Ascending aorta (tissue), 2 donors: ENCODE measurements at regions of chr11 and their contacts with region 1.

Region 1: DNA sequence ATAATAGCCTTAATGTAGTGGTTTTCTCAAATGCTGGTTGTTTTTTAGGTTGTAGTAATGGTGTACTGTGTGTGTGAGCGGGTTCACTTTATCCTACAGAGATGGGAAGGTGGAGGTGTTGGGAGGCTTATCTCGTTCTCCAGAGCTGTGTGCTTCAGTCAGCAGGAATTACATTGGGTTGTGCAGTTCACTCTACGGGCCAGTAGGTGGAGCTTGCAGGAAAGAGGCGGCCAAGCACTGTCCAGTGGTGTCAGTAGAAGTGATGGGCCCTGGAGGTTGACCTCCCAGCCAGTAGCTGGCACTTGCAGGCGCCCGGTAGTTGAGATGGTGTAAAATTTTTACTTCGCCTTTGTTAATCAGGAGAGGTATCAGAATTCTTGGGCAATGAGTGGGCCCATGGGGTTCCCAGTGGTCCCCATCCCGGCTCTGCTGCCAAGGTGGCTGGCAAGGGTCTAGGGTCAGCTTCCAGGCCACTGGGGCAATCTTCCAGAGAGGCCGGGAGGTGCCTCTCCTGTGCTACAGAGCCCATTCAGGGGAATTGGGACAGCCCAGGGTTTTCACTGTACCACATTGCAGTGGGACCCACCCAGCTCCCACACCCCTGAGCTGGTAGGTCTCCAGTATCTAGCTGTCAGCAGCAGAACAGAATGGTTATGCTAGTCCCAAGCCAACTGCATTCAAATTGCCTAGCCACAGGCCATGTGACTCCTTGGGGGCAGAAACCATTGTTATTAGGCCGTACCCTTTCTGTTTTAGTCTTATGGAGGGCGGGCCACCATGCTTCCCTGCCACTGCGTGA is 43.9 kb downstream of the BIRC2 start:
- DNase-seq: peak in 1 of 2 donors; percentile 77
- H3K4me3 ChIP-seq: no peak overlapping the region
- H3K27ac ChIP-seq: no peak overlapping the region
- H3K4me1 ChIP-seq: no peaks in the 10 kb centered on the region
- H3K27me3 ChIP-seq: no peaks in the 10 kb centered on the region
- CTCF ChIP-seq: peak; percentile 69 to 76 (median 72)

Region 2: GRCh38 chr11:102410382-102410784 is 19.5 kb after region 1 on chr11:
- intact Hi-C with region 1: no loop called
- DNase-seq: no peak
- H3K4me3 ChIP-seq: no peak overlapping the region
- H3K27ac ChIP-seq: no peak overlapping the region
- H3K4me1 ChIP-seq: no peaks in the 10 kb centered on the region
- H3K27me3 ChIP-seq: no peaks in the 10 kb centered on the region
- CTCF ChIP-seq: no peak

Region 3: GRCh38 chr11:102451681-102452460 is 61.0 kb after region 1 on chr11:
- intact Hi-C with region 1: loop called (anchors 5 kb)
- DNase-seq: peak in 1 of 2 donors; percentile 73
- H3K4me3 ChIP-seq: peak overlapping the region; percentile 93 to 94
- H3K27ac ChIP-seq: peak overlapping the region; percentile 80 to 81
- H3K4me1 ChIP-seq: peaks cover 0 to 5% of the 10 kb centered on the region in 2 donors
- H3K27me3 ChIP-seq: no peaks in the 10 kb centered on the region
- CTCF ChIP-seq: peak in 1 of 3 experiments; percentile 28

Region 4: DNA sequence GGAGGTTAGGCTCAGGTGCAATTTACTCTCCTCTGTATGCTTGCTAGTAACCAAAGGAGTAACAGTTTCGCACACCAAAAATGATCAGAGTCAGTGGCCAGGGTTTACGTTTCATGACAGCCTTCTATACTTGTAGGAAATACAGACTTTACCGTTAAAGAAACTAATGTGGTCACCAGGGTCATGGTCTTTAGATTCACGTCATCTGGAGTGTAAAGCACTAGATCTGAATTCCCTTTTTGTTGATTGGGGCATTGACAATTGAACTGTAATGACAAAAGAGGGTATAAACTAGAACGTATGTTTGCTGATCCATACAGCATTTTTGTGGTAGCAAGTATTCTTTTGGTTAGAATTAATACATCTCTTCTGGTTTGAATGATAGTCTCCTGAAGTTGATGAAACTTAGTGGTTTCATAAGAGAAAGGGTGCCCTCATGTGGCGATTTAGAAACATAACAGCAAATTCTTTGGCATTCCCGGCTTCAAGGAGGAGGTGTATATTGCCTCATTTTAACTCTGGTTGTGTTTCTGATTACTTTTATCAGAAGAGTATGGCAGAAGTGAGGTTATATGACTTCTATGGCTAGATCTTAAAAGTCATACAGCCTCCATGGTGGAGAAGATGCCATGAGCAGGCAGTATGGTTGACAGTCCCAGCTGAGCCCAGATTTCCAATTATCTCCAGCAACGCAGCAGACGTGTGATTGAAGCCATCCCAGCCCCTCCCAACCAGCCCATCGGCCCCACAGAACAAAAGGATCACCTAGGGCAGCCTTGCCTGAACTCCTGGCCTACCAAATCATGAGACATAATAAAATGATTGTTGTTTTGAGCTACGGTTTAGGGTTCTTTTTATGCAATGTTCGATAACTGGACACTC is 104.5 kb after region 1 on chr11:
- intact Hi-C with region 1: loop called (anchors 1 kb)
- DNase-seq: no peak
- H3K4me3 ChIP-seq: no peak overlapping the region
- H3K27ac ChIP-seq: no peak overlapping the region
- H3K4me1 ChIP-seq: no peaks in the 10 kb centered on the region
- H3K27me3 ChIP-seq: no peaks in the 10 kb centered on the region
- CTCF ChIP-seq: peak; percentile 38 to 66 (median 54)

Region 5: DNA sequence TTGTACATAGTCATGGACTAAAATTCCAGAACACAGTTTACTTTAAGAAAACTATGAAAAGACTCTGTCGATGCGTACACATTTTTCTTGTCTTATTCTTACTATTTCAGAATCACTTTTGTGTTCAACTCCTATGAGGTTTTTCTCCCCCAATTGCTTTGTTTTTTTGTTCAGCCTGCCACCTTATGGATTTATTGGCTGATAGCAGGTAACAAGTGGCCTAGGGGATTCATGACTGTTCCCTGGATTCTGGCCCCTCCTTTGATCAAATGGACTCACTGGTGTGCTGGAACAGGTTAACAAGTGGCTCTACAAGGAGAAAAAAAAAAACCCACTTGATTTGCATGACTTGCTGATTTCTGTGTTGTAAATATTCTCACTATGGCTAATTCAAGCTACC is 223.6 kb after region 1 on chr11:
- intact Hi-C with region 1: loop called (anchors 5 kb)
- DNase-seq: no peak
- H3K4me3 ChIP-seq: no peak overlapping the region
- H3K27ac ChIP-seq: no peak overlapping the region
- H3K4me1 ChIP-seq: no peaks in the 10 kb centered on the region
- H3K27me3 ChIP-seq: no peaks in the 10 kb centered on the region
- CTCF ChIP-seq: no peak

Region 6: GRCh38 chr11:102780491-102780918 is 389.6 kb after region 1 on chr11 and contains the start of gene MMP10:
- intact Hi-C with region 1: no loop called
- DNase-seq: no peak
- H3K4me3 ChIP-seq: no peak within 1 kb of the TSS
- H3K27ac ChIP-seq: no peak within 1 kb of the TSS
- H3K4me1 ChIP-seq: no peaks in the 10 kb centered on the region
- H3K27me3 ChIP-seq: no peaks in the 10 kb centered on the region
- CTCF ChIP-seq: no peak
- total RNA-seq, gene MMP10: not detected

Region 7: DNA sequence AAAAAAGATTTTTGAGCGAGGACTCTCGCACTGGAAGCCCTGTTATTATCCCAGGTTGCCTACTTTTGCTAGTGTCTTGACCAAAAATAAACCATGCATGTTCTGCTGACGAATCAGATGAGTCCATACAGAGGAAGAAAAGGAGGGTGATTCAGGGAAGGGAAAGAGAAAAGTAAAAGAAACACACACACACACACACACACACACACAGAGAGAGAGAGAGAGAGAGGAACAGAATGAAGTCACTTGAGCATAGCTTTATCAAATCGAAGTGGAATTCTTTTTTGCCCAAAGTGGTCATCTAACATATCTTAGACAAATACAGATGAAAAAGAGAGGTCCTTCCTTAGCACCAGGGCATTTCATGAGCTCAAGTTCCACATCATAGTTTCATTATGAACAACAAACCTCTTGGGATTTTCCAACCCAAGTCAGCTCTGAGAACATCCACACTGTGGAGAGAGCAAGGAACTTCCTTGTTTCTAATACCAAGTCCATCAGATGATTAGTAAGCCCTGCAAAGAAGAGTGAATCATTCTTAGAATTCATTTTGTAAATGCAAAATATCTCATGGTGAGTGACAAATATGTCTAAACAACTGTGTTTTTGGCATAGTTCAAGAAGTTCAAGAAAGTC is 491.6 kb after region 1 on chr11:
- intact Hi-C with region 1: no loop called
- DNase-seq: no peak
- H3K4me3 ChIP-seq: no peak overlapping the region
- H3K27ac ChIP-seq: no peak overlapping the region
- H3K4me1 ChIP-seq: no peaks in the 10 kb centered on the region
- H3K27me3 ChIP-seq: no peaks in the 10 kb centered on the region
- CTCF ChIP-seq: no peak